Aorta (tissue), 5 donors: ENCODE measurements at regions of chr7 and their contacts with region 1.

Region 1: DNA sequence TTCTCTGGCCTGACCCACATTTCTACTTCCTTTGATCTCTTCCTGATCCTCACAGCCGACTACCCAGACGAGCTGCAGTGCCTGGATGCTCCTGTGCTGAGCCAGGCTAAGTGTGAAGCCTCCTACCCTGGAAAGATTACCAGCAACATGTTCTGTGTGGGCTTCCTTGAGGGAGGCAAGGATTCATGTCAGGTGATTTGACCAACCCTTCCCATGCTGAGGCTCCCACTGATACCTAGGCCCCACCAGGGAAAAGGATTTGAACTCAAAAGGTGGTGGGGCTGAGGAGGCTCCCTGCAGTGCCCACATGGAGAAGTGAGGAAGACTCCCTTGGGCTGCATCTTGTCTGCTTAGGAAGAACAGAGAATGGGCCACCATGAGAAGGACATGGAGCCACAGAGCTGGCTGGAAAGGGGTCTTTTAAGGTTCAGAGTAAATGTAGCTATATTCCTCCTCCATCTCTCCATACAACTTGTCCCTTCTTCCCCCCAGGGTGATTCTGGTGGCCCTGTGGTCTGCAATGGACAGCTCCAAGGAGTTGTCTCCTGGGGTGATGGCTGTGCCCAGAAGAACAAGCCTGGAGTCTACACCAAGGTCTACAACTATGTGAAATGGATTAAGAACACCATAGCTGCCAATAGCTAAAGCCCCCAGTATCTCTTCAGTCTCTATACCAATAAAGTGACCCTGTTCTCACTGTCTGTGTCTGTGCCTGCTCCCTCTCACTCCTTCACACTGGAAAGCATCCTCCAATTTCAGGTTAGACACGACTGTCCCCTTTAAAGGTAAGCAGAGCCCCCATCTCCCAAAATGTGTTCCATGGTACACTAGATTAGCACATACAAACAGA is 3.3 kb downstream of the PRSS1 start:
- DNase-seq: no peak
- ATAC-seq: no peak
- H3K4me3 ChIP-seq: no peak overlapping the region
- H3K27ac ChIP-seq: no peak overlapping the region
- H3K4me1 ChIP-seq: no peaks in the 10 kb centered on the region
- H3K27me3 ChIP-seq: no peaks in the 10 kb centered on the region

Region 2: GRCh38 chr7:142733271-142733670 is 19.3 kb before region 1 on chr7:
- intact Hi-C with region 1: loop called in 1 of 2 experiments (anchors 1 kb)
- DNase-seq: no peak
- ATAC-seq: no peak
- H3K4me3 ChIP-seq: no peak overlapping the region
- H3K27ac ChIP-seq: no peak overlapping the region
- H3K4me1 ChIP-seq: no peaks in the 10 kb centered on the region
- H3K27me3 ChIP-seq: no peaks in the 10 kb centered on the region